HCT116 (cell line): ENCODE measurements at regions of chr12 and their contacts with region 1.

Region 1: GRCh38 chr12:23055004-23055403 is 430.0 kb downstream of the ETNK1 start:
- DNase-seq: peak; percentile 8
- ATAC-seq: peak; percentile 61; the same call in 1 of the 2 replicates
- H3K4me3 ChIP-seq: no peak overlapping the region
- H3K27ac ChIP-seq: no peak overlapping the region
- H3K4me1 ChIP-seq: no peaks in the 10 kb centered on the region
- H3K27me3 ChIP-seq: no peaks in the 10 kb centered on the region
- CTCF ChIP-seq: peak; percentile 8 to 54 (median 39); a peak in 5 of 6 replicates
- POLR2A ChIP-seq: no peak
- RAD21 ChIP-seq: peak; percentile 50

Region 2: DNA sequence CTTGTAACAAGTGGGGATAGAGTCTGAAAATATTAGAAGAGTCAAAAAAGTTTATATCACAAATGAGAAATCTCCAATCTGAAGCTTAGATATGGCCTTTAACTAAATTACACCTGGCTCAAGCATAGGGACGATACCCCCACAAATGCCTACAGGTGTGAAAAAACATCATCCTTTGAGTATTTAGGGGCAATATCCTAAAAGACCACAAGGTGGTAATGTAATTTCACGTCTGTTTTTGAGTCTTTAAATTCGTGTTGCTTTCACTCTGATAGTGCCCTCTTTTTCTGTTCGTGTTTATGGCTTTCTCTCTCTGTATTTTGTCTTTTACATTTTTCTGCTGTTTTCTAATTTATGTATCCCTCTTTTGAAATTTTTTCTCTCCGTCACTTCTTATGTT is 345.7 kb before region 1 on chr12:
- CTCF ChIA-PET with region 1: no interaction called
- POLR2A ChIA-PET with region 1: no interaction called
- RAD21 ChIA-PET with region 1: no interaction called
- intact Hi-C with region 1: loop called (anchors 1 kb)
- DNase-seq: peak; percentile 26
- ATAC-seq: no peak
- H3K4me3 ChIP-seq: no peak overlapping the region
- H3K27ac ChIP-seq: no peak overlapping the region
- H3K4me1 ChIP-seq: no peaks in the 10 kb centered on the region
- H3K27me3 ChIP-seq: no peaks in the 10 kb centered on the region
- CTCF ChIP-seq: peak; percentile 23 to 69 (median 44); a peak in 4 of 6 replicates
- POLR2A ChIP-seq: no peak
- RAD21 ChIP-seq: peak; percentile 60

Region 3: DNA sequence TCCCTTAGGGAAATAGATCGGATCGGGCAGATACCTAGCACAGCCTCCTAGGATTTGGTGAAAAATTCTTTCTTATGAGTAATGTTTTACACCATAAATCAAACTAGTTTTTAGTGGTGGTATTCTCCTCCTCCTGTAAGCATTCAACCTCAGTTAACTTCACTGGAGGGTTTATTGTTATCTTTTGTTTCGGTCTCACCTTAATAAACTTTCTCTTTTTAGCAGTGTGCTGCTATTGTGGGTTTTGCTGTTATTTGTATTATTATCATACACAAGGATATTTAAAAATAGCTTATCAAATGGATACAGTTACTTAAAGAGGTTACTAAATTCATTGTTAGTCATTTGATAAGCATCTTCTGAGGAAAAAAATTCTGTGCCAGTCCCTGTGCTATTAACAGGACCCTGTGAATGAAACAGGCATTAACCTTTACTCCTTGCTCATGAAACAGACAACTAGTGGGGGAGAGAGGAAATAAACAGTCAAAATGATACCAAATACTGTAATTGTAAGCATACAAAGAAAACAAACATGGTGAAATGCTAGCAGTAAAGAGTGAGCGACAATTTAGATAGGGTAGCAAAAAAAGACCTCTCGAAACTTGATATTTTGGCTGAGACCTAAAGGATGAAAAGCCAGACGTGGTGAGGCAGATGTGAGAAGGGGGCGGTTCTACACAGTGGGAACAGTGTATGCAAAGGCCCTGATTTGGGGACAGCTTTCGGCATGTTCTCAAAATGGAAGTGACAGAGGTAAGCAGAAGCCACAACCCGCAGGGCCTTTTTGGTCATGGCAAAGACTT is 1073.1 kb after region 1 on chr12:
- CTCF ChIA-PET with region 1: no interaction called
- POLR2A ChIA-PET with region 1: no interaction called
- RAD21 ChIA-PET with region 1: no interaction called
- intact Hi-C with region 1: no loop called
- DNase-seq: no peak
- ATAC-seq: no peak
- H3K4me3 ChIP-seq: no peak overlapping the region
- H3K27ac ChIP-seq: no peak overlapping the region
- H3K4me1 ChIP-seq: no peaks in the 10 kb centered on the region
- H3K27me3 ChIP-seq: no peaks in the 10 kb centered on the region
- CTCF ChIP-seq: no peak
- POLR2A ChIP-seq: no peak
- RAD21 ChIP-seq: no peak